ENCODE measurements at regions of chr14 and their contacts with region 1.

Region 1: GRCh38 chr14:51094901-51095853 is at the start of gene TRIM9:
- DNase-seq: peak; percentile 96 to 100 (median 99)
- H3K4me3 ChIP-seq: peak within 1 kb of the TSS; percentile 57 to 98 (median 85)
- H3K27ac ChIP-seq: peak within 1 kb of the TSS; percentile 92 to 100 (median 99)
- H3K27me3 ChIP-seq: no peaks in the 10 kb centered on the region
- CTCF ChIP-seq: peak in 28 of 56 donors; percentile 5 to 48 (median 22)
- total RNA-seq, gene TRIM9: 145 to 347 (median 241) TPM

Region 2: GRCh38 chr14:50198499-50198898 is 896.7 kb before region 1 on chr14:
- intact Hi-C with region 1: no loop called
- DNase-seq: no peak
- H3K4me3 ChIP-seq: no peak overlapping the region
- H3K27ac ChIP-seq: no peak overlapping the region
- H3K27me3 ChIP-seq: no peaks in the 10 kb centered on the region
- CTCF ChIP-seq: no peak

Region 3: GRCh38 chr14:50860478-50861086 is 234.6 kb before region 1 on chr14:
- intact Hi-C with region 1: loop called in 1 of 2 experiments (anchors 10 kb)
- DNase-seq: peak; percentile 72 to 92 (median 80)
- H3K4me3 ChIP-seq: peak overlapping the region; percentile 40 to 90 (median 66)
- H3K27ac ChIP-seq: peak overlapping the region; percentile 50 to 95 (median 89)
- H3K27me3 ChIP-seq: no peaks in the 10 kb centered on the region
- CTCF ChIP-seq: peak; percentile 62 to 91 (median 84)

Region 4: DNA sequence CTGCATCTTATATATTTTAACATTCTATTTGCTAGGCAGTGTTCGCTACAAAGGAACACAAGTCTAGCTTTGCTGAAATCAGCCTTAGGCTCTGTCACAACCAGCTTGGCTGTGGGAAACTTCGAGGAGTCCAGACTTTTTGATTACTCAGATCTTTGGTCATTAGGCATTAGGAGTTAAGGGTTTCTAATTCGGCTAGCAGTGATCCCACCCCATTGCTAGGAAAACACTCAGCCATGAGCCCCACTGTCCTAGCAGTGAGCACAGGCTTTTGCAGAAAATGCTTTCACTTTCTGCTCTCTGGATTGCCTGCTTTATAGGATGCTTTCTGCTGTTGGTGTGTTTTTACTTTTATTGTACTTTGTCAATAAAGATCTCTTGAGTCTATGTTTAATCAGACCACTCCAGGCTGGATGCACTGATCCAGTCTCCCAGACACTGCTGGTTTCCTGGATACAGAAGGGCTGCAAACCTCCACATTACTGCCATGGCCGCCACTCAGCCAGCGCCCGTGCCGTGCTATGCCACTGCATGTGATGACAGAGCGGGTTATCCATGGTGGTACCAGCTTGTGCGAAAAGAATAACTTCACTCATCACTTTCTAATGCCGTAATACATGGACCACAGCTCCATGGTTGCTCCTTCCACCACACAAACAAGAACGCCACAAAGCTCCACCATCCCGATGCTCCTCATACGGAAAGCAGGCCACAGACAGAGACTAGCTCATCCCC is 109.9 kb before region 1 on chr14:
- intact Hi-C with region 1: loop called in 1 of 2 experiments (anchors 1 kb)
- DNase-seq: peak in 2 of 10 donors; percentile 53 to 62
- H3K4me3 ChIP-seq: peak overlapping the region in 58 of 59 donors; percentile 2 to 62 (median 38)
- H3K27ac ChIP-seq: peak overlapping the region; percentile 24 to 95 (median 85)
- H3K27me3 ChIP-seq: no peaks in the 10 kb centered on the region
- CTCF ChIP-seq: no peak

Region 5: GRCh38 chr14:51020024-51020710 is 75.0 kb before region 1 on chr14:
- intact Hi-C with region 1: loop called (anchors 5 kb)
- DNase-seq: peak in 3 of 10 donors; percentile 45 to 94 (median 60)
- H3K4me3 ChIP-seq: peak overlapping the region in 4 of 59 donors; percentile 3 to 10 (median 4)
- H3K27ac ChIP-seq: peak overlapping the region; percentile 35 to 94 (median 89)
- H3K27me3 ChIP-seq: no peaks in the 10 kb centered on the region
- CTCF ChIP-seq: peak in 1 of 56 donors; percentile 13

Region 6: DNA sequence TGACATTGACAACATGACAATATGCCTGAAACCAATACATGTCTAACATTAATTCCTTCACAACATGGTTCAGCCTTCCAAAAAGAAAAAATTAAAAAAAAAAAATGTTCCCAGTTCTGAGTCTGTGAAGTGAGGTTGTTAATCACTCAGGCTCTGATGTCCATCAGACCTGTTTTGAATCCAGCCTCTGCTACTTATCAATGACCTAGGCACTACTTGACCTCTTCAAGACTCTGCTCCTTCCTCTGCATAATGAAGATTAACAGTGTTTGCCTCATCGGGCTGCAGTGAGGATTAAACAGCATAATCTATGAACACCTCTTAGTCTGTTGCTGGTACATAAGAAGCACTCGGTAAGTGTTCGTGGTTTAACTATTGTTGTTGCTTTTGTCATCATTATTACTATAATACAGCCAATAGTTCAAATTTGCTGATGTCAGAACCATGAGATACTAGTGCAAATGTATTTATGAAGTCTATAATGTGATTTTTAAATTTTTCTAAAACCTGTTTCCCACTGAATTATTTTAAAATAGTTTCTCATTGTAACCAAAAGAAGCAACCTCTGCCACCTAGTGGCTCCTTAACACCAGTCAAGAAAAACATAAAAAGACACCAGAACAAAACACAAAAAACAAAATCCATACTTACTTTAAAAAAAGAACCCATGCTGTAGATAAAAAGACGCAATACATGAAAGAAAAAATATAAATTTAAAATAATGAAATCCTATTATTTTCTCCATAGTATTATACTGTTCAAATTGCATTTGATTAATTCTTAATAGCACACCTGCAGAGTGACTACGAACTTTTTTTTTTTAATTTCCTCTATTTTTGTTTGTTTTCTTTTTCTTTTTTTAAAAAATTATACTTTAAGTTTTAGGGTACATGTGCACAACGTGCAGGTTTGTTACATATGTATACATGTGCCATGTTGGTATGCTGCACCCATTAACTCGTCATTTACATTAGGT is 124.6 kb after region 1 on chr14:
- intact Hi-C with region 1: loop called (anchors 5 kb)
- DNase-seq: peak in 1 of 10 donors; percentile 19
- H3K4me3 ChIP-seq: peak overlapping the region in 43 of 59 donors; percentile 1 to 54 (median 37)
- H3K27ac ChIP-seq: peak overlapping the region in 6 of 59 donors; percentile 4 to 36 (median 15)
- H3K27me3 ChIP-seq: no peaks in the 10 kb centered on the region
- CTCF ChIP-seq: peak; percentile 59 to 93 (median 76)

Measured in dorsolateral prefrontal cortex (tissue), 120 donors.